Pancreas (tissue), 10 donors: ENCODE measurements at regions of chr15 and their contacts with region 1.

Region 1: DNA sequence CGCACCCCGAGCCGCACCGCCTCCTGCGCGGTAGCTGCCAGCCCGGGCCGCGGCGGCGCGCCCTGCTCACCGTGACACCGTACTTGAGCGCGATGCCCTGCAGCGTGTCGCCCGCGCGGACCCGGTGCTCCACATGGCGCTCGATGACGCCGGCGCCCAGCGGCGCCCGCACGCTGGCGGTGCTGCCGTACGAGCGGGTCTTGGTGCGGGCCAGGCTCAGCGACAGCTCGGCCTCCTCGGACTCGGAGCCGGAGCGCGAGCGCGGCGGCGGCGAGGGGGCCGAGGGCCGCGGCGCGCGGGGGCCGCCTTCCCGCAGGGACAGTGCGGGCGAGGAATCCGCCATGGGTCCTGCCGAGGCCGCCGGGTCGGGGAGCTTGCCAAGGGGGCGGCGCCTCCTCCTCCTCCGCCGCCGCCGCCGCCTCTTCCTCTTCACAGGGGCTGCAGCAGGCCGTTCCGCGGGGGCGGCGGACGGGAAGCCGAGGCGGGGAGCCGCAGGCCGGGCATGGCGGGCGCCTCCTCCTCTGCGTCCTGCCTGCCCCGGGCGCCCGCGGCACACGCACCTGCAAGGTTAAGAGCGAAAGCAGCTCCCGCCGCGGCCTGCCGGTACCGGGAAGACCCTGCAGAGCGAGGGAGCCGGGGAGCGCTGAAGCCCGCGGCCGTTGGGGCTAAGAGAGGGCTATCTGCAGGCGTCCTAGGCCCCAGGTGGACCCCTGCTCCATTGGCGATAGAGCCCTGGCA is at the start of gene LYSMD2:
- DNase-seq: peak; percentile 70 to 90 (median 79)
- ATAC-seq: peak; percentile 83 to 92 (median 89)
- H3K4me3 ChIP-seq: peak within 1 kb of the TSS; percentile 73 to 86 (median 80)
- H3K27ac ChIP-seq: peak within 1 kb of the TSS; percentile 47 to 88 (median 86)
- H3K4me1 ChIP-seq: peaks cover 0 to 8% (median 3%) of the 10 kb centered on the region in 3 donors
- H3K27me3 ChIP-seq: no peaks in the 10 kb centered on the region
- CTCF ChIP-seq: no peak
- total RNA-seq, gene LYSMD2: 5.0 to 9.5 (median 6.3) TPM

Region 2: GRCh38 chr15:51558411-51558810 is 179.0 kb before region 1 on chr15:
- intact Hi-C with region 1: loop called in 1 of 3 experiments (anchors 10 kb)
- DNase-seq: no peak
- ATAC-seq: no peak
- H3K4me3 ChIP-seq: no peak overlapping the region
- H3K27ac ChIP-seq: no peak overlapping the region
- H3K4me1 ChIP-seq: no peaks in the 10 kb centered on the region
- H3K27me3 ChIP-seq: no peaks in the 10 kb centered on the region
- CTCF ChIP-seq: no peak

Region 3: DNA sequence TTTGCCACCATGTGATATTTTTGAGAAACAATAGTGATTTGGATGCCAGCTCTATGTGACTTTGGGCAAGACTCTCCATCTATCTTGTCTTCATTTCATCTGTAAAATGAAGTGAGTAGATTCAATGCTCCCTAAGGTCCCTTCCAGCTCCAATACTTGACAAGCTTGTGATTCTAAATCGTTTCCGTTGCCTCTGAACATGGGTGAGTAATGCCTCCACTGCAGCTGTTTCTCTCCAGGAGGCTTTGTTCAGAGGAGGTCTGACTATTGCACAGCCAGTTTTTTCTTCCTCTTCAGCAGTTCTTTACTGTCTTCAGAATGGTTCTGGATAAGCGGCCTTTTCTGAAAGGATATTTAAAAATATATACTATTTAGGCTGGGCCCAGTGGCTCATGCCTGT is 77.2 kb after region 1 on chr15:
- intact Hi-C with region 1: no loop called
- DNase-seq: no peak
- ATAC-seq: no peak
- H3K4me3 ChIP-seq: no peak overlapping the region
- H3K27ac ChIP-seq: no peak overlapping the region
- H3K4me1 ChIP-seq: no peaks in the 10 kb centered on the region
- H3K27me3 ChIP-seq: no peaks in the 10 kb centered on the region
- CTCF ChIP-seq: no peak

Region 4: GRCh38 chr15:52171386-52171785 is 433.9 kb after region 1 on chr15:
- intact Hi-C with region 1: no loop called
- DNase-seq: no peak
- ATAC-seq: peak in 3 of 4 donors; percentile 31 to 41 (median 41)
- H3K4me3 ChIP-seq: no peak overlapping the region
- H3K27ac ChIP-seq: peak overlapping the region in 1 of 4 donors; percentile 12
- H3K4me1 ChIP-seq: peaks cover 0 to 6% (median 0%) of the 10 kb centered on the region in 3 donors
- H3K27me3 ChIP-seq: no peaks in the 10 kb centered on the region
- CTCF ChIP-seq: no peak

Region 5: GRCh38 chr15:52362502-52362901 is 625.1 kb after region 1 on chr15:
- intact Hi-C with region 1: no loop called
- DNase-seq: no peak
- ATAC-seq: peak in 2 of 4 donors; percentile 8 to 55
- H3K4me3 ChIP-seq: no peak overlapping the region
- H3K27ac ChIP-seq: no peak overlapping the region
- H3K4me1 ChIP-seq: no peaks in the 10 kb centered on the region
- H3K27me3 ChIP-seq: no peaks in the 10 kb centered on the region
- CTCF ChIP-seq: no peak